ENCODE measurements at regions of chr22 and their contacts with region 1.

Region 1: GRCh38 chr22:39170825-39171622 is 18.5 kb upstream of the CBX7 start:
- DNase-seq: peak; percentile 95

Region 2: GRCh38 chr22:39306581-39307361 is 135.7 kb after region 1 on chr22:
- intact Hi-C with region 1: loop called (anchors 2 kb)
- DNase-seq: no peak

Region 3: DNA sequence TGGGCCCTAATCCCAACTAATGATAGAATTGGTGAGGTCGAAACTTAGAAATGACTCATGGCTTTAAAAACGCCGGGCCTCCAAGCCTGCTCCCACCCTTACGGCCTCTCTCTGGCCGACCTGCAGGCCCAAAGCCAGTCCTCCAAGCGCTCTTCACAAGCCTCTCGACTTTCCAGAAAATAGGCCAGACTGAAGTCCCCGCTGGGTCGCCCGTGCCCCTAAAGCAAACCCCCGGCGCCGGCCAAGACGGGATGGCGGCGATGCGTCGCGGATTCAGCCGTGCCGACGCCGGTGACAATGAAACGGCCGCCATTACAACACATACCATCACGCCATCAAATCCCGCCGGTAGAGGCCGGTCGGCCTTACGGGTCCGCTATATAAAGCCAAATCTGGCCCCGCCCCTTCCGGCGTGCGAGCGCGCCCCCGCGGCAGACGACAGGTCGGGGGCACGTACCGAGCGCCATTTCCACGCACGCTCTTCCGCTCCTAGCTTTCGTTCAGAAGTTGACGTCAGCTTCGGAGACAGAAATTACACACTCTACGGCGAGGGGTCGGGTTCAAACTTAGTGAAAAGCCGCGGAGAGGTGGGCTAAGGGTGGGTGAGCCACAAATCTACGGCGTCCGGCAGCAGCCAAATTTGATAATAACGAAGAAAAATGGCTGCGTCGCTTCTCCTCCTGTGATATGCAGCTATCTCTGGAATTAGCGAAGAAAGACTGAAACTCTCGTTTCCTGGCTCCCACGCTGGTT is 148.4 kb after region 1 on chr22 and contains the start of gene RPL3:
- intact Hi-C with region 1: loop called in 1 of 2 experiments (anchors 2 kb)
- DNase-seq: peak; percentile 99
- total RNA-seq, gene RPL3: 1,303 to 1,339 TPM

Region 4: GRCh38 chr22:40426594-40427333 is 1255.7 kb after region 1 on chr22:
- intact Hi-C with region 1: no loop called
- DNase-seq: peak; percentile 35